CD8-positive, alpha-beta T cell (primary cell): ENCODE measurements at regions of chr2 and their contacts with region 1.

Region 1: DNA sequence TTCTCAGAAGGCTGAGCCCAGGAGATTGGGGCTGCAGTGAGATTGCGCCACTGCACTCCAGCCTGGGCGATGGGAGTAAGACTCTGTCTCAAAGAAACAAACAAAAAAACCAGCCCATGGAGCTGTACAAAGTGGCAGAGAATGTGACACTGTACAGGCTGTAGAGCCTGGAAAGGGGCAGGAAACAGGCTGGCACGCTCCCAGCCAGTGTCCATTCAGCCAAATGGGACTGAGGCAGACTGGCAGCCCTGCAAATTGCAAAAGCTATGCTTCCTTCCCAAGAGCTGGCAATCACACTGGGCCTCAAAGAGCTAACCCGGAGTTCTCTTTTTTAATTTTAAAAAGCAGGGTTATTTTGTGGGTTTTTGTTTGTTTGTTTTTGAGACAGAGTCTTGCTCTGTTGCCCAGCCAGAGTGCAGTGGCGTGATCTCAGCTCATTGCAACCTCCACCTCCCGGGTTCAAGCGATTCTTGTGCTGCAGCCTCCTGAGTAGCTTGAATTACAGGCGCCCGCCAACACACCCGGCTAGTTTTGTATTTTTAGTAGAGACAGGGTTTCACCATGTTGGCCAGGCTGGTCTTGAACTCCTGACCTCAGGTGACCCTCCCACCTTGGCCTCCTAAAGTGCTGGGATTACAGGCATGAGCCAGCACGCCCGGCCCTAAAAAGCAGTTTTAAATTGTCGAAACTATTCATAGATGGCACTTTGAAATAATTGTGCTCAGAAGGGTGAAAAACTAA is 42.8 kb downstream of the SCRN3 start:
- DNase-seq: no peak
- ATAC-seq: no peak
- H3K4me3 ChIP-seq: no peak overlapping the region
- H3K4me3 Mint-ChIP-seq: no peak overlapping the region
- H3K27ac ChIP-seq: no peak overlapping the region
- H3K27ac Mint-ChIP-seq: no peak overlapping the region
- H3K4me1 ChIP-seq: no peaks in the 10 kb centered on the region
- H3K4me1 Mint-ChIP-seq: no peaks in the 10 kb centered on the region
- H3K27me3 ChIP-seq: no peaks in the 10 kb centered on the region
- H3K27me3 Mint-ChIP-seq: no peaks in the 10 kb centered on the region
- CTCF ChIP-seq: no peak

Region 2: GRCh38 chr2:174412256-174412655 is 26.1 kb before region 1 on chr2:
- CTCF ChIA-PET with region 1: no interaction called
- POLR2A ChIA-PET with region 1: no interaction called
- intact Hi-C with region 1: loop called in 1 of 2 experiments (anchors 1 kb)
- DNase-seq: no peak
- ATAC-seq: no peak
- H3K4me3 ChIP-seq: no peak overlapping the region
- H3K4me3 Mint-ChIP-seq: no peak overlapping the region
- H3K27ac ChIP-seq: no peak overlapping the region
- H3K27ac Mint-ChIP-seq: no peak overlapping the region
- H3K4me1 ChIP-seq: no peaks in the 10 kb centered on the region
- H3K4me1 Mint-ChIP-seq: no peaks in the 10 kb centered on the region
- H3K27me3 ChIP-seq: no peaks in the 10 kb centered on the region
- H3K27me3 Mint-ChIP-seq: no peaks in the 10 kb centered on the region
- CTCF ChIP-seq: no peak

Region 3: DNA sequence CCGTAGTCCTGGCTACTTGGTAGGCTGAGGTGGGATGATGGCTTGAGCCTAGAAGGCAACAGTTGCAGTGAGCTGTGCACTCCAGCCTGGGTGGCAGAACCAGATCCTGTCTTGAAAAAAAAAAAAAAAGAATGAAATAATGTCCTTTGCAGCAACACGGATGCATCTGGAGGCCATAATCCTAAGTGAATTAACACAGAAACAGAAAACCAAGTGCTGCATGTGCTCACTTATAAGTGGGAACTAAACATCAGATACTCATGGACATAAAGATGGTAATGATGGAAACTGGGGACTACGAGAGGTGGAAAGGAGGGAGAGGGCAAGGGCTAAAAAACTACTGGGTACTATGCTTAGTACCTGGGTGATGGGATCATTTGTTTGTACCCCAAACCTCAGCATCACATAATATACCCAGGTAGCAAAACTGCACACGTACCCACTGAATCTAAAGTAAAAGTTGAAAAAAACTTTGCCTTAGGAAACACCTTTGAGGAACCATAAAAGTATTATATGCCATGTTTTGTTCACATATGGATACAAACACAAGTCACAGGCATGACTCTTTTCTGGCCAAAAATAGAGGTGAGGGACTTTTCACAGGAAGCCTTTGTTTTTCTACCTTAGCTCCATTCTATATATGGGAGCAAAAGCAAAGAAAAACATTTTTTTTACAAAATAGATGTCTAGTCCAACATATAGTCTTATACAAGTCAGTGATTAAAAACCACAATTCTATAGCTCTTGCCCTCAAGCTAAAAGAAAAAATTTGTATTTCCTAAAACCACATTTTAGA is 11.9 kb after region 1 on chr2:
- CTCF ChIA-PET with region 1: no interaction called
- POLR2A ChIA-PET with region 1: interaction called, 3 read pairs
- intact Hi-C with region 1: loop called in 1 of 2 experiments (anchors 2 kb)
- DNase-seq: peak in 1 of 9 experiments; percentile 40
- ATAC-seq: peak; percentile 26
- H3K4me3 ChIP-seq: no peak overlapping the region
- H3K4me3 Mint-ChIP-seq: no peak overlapping the region
- H3K27ac ChIP-seq: no peak overlapping the region
- H3K27ac Mint-ChIP-seq: peak overlapping the region; percentile 50
- H3K4me1 ChIP-seq: peaks cover 11% of the 10 kb centered on the region
- H3K4me1 Mint-ChIP-seq: peaks cover 11% of the 10 kb centered on the region
- H3K27me3 ChIP-seq: no peaks in the 10 kb centered on the region
- H3K27me3 Mint-ChIP-seq: no peaks in the 10 kb centered on the region
- CTCF ChIP-seq: no peak

Region 4: GRCh38 chr2:174673876-174674275 is 235.6 kb after region 1 on chr2:
- CTCF ChIA-PET with region 1: no interaction called
- POLR2A ChIA-PET with region 1: no interaction called
- intact Hi-C with region 1: no loop called
- DNase-seq: no peak
- ATAC-seq: no peak
- H3K4me3 ChIP-seq: no peak overlapping the region
- H3K4me3 Mint-ChIP-seq: no peak overlapping the region
- H3K27ac ChIP-seq: no peak overlapping the region
- H3K27ac Mint-ChIP-seq: no peak overlapping the region
- H3K4me1 ChIP-seq: peaks cover 28% of the 10 kb centered on the region
- H3K4me1 Mint-ChIP-seq: peaks cover 31% of the 10 kb centered on the region
- H3K27me3 ChIP-seq: no peaks in the 10 kb centered on the region
- H3K27me3 Mint-ChIP-seq: no peaks in the 10 kb centered on the region
- CTCF ChIP-seq: no peak

Region 5: DNA sequence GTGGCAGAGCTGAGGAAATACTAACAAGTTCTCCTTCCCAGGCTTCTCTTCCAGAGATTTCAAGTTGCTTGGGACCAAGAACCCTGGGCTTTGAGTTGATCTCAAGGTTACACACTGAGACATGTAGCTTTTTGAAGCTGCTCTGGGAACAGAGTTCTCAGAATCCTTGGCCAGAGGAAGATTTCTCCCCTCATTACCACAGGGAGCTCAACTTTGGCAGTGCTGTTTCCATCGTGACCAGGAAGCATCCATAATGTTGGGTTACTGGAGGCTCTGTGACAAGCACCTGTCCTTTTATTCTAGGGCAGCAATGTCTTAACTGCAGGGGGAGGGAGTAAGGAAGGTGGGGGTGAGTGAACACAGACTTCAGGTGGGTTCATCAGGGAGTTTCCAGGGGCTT is 367.5 kb after region 1 on chr2:
- CTCF ChIA-PET with region 1: no interaction called
- POLR2A ChIA-PET with region 1: no interaction called
- intact Hi-C with region 1: no loop called
- DNase-seq: no peak
- ATAC-seq: no peak
- H3K4me3 ChIP-seq: no peak overlapping the region
- H3K4me3 Mint-ChIP-seq: no peak overlapping the region
- H3K27ac ChIP-seq: no peak overlapping the region
- H3K27ac Mint-ChIP-seq: no peak overlapping the region
- H3K4me1 ChIP-seq: no peaks in the 10 kb centered on the region
- H3K4me1 Mint-ChIP-seq: no peaks in the 10 kb centered on the region
- H3K27me3 ChIP-seq: no peaks in the 10 kb centered on the region
- H3K27me3 Mint-ChIP-seq: no peaks in the 10 kb centered on the region
- CTCF ChIP-seq: no peak

Region 6: DNA sequence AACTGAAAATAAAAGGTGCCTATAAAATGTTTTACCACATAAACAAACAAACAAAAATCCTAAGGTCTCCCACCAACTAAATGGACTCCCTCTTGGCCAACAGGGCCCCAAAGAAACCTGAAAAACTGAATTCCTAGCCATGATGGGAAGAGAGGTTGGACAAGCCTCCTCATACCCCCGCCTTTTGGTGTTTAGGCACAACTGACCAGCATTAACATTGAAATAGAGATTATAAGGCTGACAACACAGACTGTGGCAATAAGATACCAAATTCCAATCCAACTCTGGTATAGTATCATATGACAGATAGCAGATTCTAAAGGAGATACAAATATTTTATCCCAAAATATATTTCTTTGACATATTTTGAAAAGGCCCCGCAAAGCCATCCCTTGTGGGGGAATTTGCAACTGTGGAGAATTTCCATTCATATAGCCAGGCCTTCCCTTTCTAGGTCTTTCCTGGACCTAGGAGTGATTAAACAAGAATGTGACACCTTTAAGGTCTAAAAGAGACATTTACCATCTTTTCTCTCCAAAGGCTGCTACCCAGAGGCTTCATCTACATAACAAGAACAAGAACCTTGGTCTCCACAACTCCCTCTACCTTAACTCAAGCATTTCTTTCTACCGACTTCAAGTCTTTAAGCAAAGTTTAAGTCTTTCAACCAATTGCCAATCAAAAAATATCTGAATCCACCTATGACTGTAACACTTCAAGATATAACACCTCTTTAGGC is 486.9 kb after region 1 on chr2:
- CTCF ChIA-PET with region 1: no interaction called
- POLR2A ChIA-PET with region 1: no interaction called
- intact Hi-C with region 1: no loop called
- DNase-seq: no peak
- ATAC-seq: no peak
- H3K4me3 ChIP-seq: no peak overlapping the region
- H3K4me3 Mint-ChIP-seq: no peak overlapping the region
- H3K27ac ChIP-seq: no peak overlapping the region
- H3K27ac Mint-ChIP-seq: no peak overlapping the region
- H3K4me1 ChIP-seq: no peaks in the 10 kb centered on the region
- H3K4me1 Mint-ChIP-seq: no peaks in the 10 kb centered on the region
- H3K27me3 ChIP-seq: no peaks in the 10 kb centered on the region
- H3K27me3 Mint-ChIP-seq: no peaks in the 10 kb centered on the region
- CTCF ChIP-seq: no peak